Activated CD8-positive, alpha-beta T cell treated with anti-CD3 and anti-CD28 coated beads for 36 hours (primary cell): ENCODE measurements at regions of chr1 and their contacts with region 1.

Region 1: GRCh38 chr1:28877132-28877781 is 37.1 kb upstream of the EPB41 start:
- DNase-seq: peak; percentile 84
- ATAC-seq: peak; percentile 77
- H3K4me3 Mint-ChIP-seq: no peak overlapping the region
- H3K27ac Mint-ChIP-seq: no peak overlapping the region
- H3K4me1 Mint-ChIP-seq: peaks cover 6% of the 10 kb centered on the region
- H3K27me3 Mint-ChIP-seq: peaks cover 2% of the 10 kb centered on the region
- CTCF ChIP-seq: peak; percentile 98

Region 2: GRCh38 chr1:28518000-28518744 is 359.1 kb before region 1 on chr1:
- CTCF ChIA-PET with region 1: interaction called, 6 read pairs
- POLR2A ChIA-PET with region 1: interaction called, 3 read pairs
- intact Hi-C with region 1: loop called (anchors 5 kb)
- DNase-seq: peak; percentile 93
- ATAC-seq: peak; percentile 81
- H3K4me3 Mint-ChIP-seq: peak overlapping the region; percentile 81
- H3K27ac Mint-ChIP-seq: peak overlapping the region; percentile 91
- H3K4me1 Mint-ChIP-seq: peaks cover 29% of the 10 kb centered on the region
- H3K27me3 Mint-ChIP-seq: no peaks in the 10 kb centered on the region
- CTCF ChIP-seq: peak; percentile 99

Region 3: DNA sequence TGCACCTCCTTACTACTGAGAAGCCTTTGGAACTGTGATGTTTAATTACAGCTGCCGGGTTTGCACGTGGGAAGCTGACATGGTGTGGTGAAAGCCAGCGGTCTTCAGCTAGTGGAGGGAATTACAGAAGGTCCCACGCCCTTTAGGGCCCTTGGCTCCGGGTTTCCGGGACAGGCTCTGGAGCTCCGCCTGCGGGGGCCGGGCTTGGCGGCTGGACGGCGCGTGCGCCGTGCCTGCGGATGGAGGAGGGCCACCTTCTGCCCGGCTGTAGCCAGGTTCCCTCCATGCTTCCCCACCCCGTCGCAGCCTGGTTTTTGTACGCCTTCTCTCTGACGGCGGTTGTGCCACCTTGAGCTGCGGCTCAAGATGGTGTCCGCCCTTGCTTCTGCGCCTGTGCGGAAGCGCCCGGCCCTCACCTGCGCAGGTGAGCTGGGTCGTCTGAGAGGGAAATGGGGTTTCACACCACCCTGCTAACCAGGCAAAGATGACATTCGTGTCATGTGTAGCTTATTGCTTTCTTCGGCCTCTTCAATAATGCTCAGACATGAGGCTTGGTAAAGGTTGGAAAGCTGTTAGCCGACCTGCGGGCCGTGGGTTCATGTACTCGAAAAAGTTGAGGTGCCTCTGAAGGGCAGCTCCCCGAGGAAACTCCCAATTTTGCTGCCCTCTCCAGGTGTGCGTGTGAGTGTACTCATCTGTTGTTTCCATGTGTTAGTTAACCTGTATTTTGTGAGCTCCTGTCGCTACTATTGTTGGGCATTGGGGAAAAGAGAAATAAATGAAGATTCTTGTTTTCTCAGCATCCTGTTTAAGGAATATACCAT is 101.9 kb before region 1 on chr1:
- CTCF ChIA-PET with region 1: interaction called, 43 read pairs
- POLR2A ChIA-PET with region 1: no interaction called
- intact Hi-C with region 1: no loop called
- DNase-seq: peak; percentile 71
- ATAC-seq: peak; percentile 94
- H3K4me3 Mint-ChIP-seq: peak overlapping the region; percentile 68
- H3K27ac Mint-ChIP-seq: peak overlapping the region; percentile 71
- H3K4me1 Mint-ChIP-seq: peaks cover 4% of the 10 kb centered on the region
- H3K27me3 Mint-ChIP-seq: no peaks in the 10 kb centered on the region
- CTCF ChIP-seq: no peak

Region 4: DNA sequence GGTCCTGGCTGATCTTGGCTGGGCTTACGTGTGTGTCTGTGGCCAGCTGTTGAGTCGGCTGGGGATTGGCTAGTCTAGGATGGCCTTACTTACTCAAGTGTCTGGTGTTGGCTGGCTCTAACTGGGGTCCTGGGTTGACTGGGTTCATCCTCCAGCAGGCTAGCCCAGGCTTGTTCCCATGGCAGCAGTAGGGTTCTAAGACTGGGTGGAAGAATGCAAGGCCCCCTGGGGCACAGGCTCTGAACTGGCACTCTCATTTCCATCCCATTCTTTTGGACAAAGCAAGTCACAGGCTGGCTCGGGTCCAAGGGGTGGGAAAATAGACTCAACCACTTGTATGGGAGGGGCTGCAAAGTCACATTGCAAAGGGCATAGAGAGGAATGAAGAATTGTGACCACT is 73.2 kb before region 1 on chr1:
- CTCF ChIA-PET with region 1: interaction called, 11 read pairs
- POLR2A ChIA-PET with region 1: no interaction called
- intact Hi-C with region 1: no loop called
- DNase-seq: no peak
- ATAC-seq: no peak
- H3K4me3 Mint-ChIP-seq: no peak overlapping the region
- H3K27ac Mint-ChIP-seq: no peak overlapping the region
- H3K4me1 Mint-ChIP-seq: no peaks in the 10 kb centered on the region
- H3K27me3 Mint-ChIP-seq: peaks cover 4% of the 10 kb centered on the region
- CTCF ChIP-seq: no peak

Region 5: DNA sequence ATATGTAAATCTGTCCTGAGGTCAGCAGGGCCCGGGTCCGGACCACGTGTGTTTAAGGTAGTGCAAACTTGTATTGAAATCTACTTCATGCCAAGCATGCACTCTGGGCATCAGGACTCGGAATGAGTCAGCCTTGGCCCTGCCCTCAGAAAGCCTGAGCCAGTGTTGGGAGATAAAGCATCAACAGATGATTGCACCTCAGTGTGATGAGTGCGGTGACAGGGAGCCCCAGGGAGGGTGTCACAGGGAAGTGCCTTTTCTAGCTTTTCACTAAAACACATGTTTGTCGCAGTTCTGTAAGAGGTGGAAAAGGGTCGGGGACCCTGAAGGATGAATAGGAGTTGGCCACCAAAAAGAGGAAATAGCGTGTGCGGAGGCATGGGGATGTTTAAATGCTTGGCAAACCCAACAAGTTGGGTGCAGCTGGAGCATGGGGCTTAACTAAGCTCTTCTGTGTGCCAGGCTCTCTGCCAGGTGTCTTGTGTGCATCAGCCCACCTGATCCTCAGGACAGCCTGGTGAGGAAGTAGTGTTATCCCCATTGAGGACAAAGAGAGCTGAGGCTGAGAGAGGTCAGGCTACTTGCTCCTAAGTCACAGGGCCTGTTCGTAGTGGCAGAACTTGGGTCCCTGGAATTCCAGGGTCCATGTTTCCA is 11.1 kb before region 1 on chr1:
- CTCF ChIA-PET with region 1: interaction called, 24 read pairs
- POLR2A ChIA-PET with region 1: no interaction called
- intact Hi-C with region 1: no loop called
- DNase-seq: no peak
- ATAC-seq: no peak
- H3K4me3 Mint-ChIP-seq: no peak overlapping the region
- H3K27ac Mint-ChIP-seq: no peak overlapping the region
- H3K4me1 Mint-ChIP-seq: no peaks in the 10 kb centered on the region
- H3K27me3 Mint-ChIP-seq: no peaks in the 10 kb centered on the region
- CTCF ChIP-seq: no peak

Region 6: GRCh38 chr1:29129916-29130315 is 252.7 kb after region 1 on chr1:
- CTCF ChIA-PET with region 1: no interaction called
- POLR2A ChIA-PET with region 1: no interaction called
- intact Hi-C with region 1: no loop called
- DNase-seq: no peak
- ATAC-seq: no peak
- H3K4me3 Mint-ChIP-seq: no peak overlapping the region
- H3K27ac Mint-ChIP-seq: no peak overlapping the region
- H3K4me1 Mint-ChIP-seq: no peaks in the 10 kb centered on the region
- H3K27me3 Mint-ChIP-seq: peaks cover 15% of the 10 kb centered on the region
- CTCF ChIP-seq: no peak

Region 7: GRCh38 chr1:29202584-29203340 is 325.5 kb after region 1 on chr1:
- CTCF ChIA-PET with region 1: interaction called, 40 read pairs
- POLR2A ChIA-PET with region 1: interaction called, 3 read pairs
- intact Hi-C with region 1: loop called (anchors 2 kb)
- DNase-seq: peak; percentile 97
- ATAC-seq: peak; percentile 97
- H3K4me3 Mint-ChIP-seq: no peak overlapping the region
- H3K27ac Mint-ChIP-seq: peak overlapping the region; percentile 21
- H3K4me1 Mint-ChIP-seq: peaks cover 15% of the 10 kb centered on the region
- H3K27me3 Mint-ChIP-seq: no peaks in the 10 kb centered on the region
- CTCF ChIP-seq: peak; percentile 93

Region 8: DNA sequence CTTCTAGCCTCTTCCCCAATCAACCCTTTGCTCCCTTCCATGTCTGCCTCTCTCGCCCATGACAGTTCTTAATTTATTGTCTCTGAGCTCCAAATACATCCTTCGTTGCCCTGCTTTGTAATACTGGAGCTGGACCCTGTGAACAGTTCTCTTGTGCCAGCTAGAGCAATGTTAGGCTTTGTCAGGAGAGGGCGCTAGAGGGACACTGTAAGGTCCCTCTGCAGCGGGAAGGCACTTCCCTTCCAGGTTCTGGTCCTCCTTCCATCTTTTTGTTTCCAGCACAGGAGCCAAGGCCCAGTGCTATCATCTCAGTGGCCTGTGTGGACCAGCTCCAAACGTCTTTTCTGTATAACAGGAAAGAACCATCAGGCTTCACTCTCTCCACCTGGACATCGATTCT is 454.9 kb after region 1 on chr1:
- CTCF ChIA-PET with region 1: no interaction called
- POLR2A ChIA-PET with region 1: no interaction called
- intact Hi-C with region 1: no loop called
- DNase-seq: peak; percentile 52
- ATAC-seq: peak; percentile 69
- H3K4me3 Mint-ChIP-seq: no peak overlapping the region
- H3K27ac Mint-ChIP-seq: no peak overlapping the region
- H3K4me1 Mint-ChIP-seq: no peaks in the 10 kb centered on the region
- H3K27me3 Mint-ChIP-seq: peaks cover 11% of the 10 kb centered on the region
- CTCF ChIP-seq: peak; percentile 50